CD8-positive, alpha-beta T cell (primary cell): ENCODE measurements at regions of chr9 and their contacts with region 1.

Region 1: DNA sequence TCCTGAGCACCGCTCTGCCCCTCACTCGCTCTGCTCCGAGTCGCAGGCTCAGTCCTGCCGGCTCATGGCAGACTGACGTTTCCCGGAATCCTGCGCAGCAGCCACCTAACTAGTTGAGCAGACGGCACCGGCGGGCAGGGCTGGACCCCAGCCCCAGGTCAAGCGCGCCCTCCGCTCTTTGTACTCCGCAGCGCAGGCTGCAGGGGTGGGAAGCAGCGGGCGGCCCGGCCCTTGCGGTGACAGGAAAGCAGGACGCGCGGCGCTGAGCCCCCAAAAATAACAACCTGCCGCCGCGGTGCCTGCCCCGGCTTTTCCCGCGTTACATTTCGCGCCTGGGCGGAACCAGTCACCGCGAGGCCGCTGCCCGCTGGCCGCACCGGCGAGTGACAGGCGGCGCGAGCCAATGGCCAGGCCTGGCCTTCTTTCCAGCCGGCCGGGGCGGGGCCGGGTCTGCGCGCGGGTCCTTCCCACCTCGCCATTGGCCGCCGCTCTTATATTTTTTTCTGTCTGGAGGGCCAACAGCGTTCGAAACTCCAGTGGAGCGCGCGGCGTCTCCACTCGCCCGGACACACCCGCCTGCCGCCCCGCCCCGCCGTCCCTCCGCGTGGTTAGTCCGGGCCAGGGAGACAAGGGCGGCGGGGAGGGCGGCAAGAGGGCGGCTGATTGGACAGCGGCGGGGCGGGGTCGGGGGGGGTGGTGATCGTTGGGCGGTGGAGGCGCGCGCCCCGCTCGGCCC is at the start of gene ZNF367:
- DNase-seq: peak; percentile 80 to 95 (median 90)
- ATAC-seq: peak; percentile 71
- H3K4me3 ChIP-seq: peak within 1 kb of the TSS; percentile 93 to 96
- H3K4me3 Mint-ChIP-seq: peak within 1 kb of the TSS; percentile 90
- H3K27ac ChIP-seq: peak within 1 kb of the TSS; percentile 88 to 91
- H3K27ac Mint-ChIP-seq: peak within 1 kb of the TSS; percentile 94
- H3K4me1 ChIP-seq: peaks cover 36% of the 10 kb centered on the region
- H3K4me1 Mint-ChIP-seq: peaks cover 33% of the 10 kb centered on the region
- H3K27me3 ChIP-seq: no peaks in the 10 kb centered on the region
- H3K27me3 Mint-ChIP-seq: no peaks in the 10 kb centered on the region
- CTCF ChIP-seq: no peak
- total RNA-seq, gene ZNF367: 6.1 to 6.4 TPM

Region 2: GRCh38 chr9:94726495-94727191 is 1691.6 kb before region 1 on chr9 and contains the start of gene AOPEP:
- CTCF ChIA-PET with region 1: no interaction called
- POLR2A ChIA-PET with region 1: no interaction called
- intact Hi-C with region 1: loop called (anchors 2 to 5 kb)
- DNase-seq: peak; percentile 98 to 100 (median 99)
- ATAC-seq: peak; percentile 95
- H3K4me3 ChIP-seq: peak within 1 kb of the TSS; percentile 88 to 92
- H3K4me3 Mint-ChIP-seq: peak within 1 kb of the TSS; percentile 99
- H3K27ac ChIP-seq: peak within 1 kb of the TSS; percentile 95 to 96
- H3K27ac Mint-ChIP-seq: peak within 1 kb of the TSS; percentile 98
- H3K4me1 ChIP-seq: peaks cover 6% of the 10 kb centered on the region
- H3K4me1 Mint-ChIP-seq: peaks cover 12% of the 10 kb centered on the region
- H3K27me3 ChIP-seq: no peaks in the 10 kb centered on the region
- H3K27me3 Mint-ChIP-seq: no peaks in the 10 kb centered on the region
- CTCF ChIP-seq: no peak
- total RNA-seq, gene AOPEP: 4.5 to 5.2 TPM

Region 3: GRCh38 chr9:96383165-96383942 is 34.9 kb before region 1 on chr9 and contains the start of gene SLC35D2:
- CTCF ChIA-PET with region 1: no interaction called
- POLR2A ChIA-PET with region 1: interaction called, 5 read pairs
- intact Hi-C with region 1: loop called (anchors 1 to 5 kb)
- DNase-seq: peak in 7 of 9 experiments; percentile 1 to 62 (median 15)
- ATAC-seq: peak; percentile 63
- H3K4me3 ChIP-seq: peak within 1 kb of the TSS; percentile 54 to 60
- H3K4me3 Mint-ChIP-seq: peak within 1 kb of the TSS; percentile 90
- H3K27ac ChIP-seq: peak within 1 kb of the TSS in 1 of 2 experiments; percentile 43
- H3K27ac Mint-ChIP-seq: peak within 1 kb of the TSS; percentile 85
- H3K4me1 ChIP-seq: peaks cover 18% of the 10 kb centered on the region
- H3K4me1 Mint-ChIP-seq: peaks cover 36% of the 10 kb centered on the region
- H3K27me3 ChIP-seq: no peaks in the 10 kb centered on the region
- H3K27me3 Mint-ChIP-seq: no peaks in the 10 kb centered on the region
- CTCF ChIP-seq: no peak
- total RNA-seq, gene SLC35D2: 18.5 to 20.5 TPM

Region 4: DNA sequence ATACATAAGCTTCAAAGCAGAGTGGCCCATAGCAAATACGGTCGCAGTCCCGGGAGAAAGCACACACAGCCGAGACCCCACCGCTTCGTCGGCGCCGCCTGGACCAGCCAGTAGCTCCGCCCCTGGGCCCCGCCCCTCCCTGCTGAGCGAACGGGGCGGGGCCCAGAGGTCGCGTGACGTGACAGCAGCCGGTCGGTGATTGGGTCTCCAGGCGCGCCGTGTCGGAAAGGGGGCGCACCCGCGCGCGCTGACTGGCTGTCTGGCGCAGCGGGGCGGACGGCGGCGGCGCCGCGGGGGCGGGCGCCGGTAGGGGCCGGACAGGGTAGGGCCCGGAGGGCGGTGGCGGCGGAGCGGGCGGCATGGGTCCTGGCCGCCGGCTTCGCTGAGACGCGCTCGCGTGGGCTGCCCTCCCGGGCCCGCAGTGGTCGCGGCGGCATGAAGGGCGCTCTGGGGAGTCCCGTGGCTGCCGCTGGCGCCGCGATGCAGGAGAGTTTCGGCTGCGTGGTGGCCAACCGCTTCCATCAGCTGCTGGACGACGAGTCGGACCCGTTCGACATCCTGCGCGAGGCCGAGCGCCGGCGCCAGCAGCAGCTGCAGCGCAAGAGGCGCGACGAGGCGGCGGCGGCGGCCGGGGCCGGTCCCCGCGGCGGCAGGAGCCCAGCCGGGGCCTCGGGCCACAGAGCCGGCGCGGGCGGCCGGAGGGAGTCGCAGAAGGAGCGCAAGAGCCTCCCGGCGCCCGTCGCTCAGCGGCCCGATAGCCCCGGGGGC is 31.8 kb after region 1 on chr9 and contains the start of gene HABP4:
- CTCF ChIA-PET with region 1: interaction called, 4 read pairs
- POLR2A ChIA-PET with region 1: interaction called, 38 read pairs
- intact Hi-C with region 1: loop called (anchors 1 kb)
- DNase-seq: peak; percentile 89 to 97 (median 96)
- ATAC-seq: peak; percentile 93
- H3K4me3 ChIP-seq: peak within 1 kb of the TSS; percentile 62 to 65
- H3K4me3 Mint-ChIP-seq: peak within 1 kb of the TSS; percentile 95
- H3K27ac ChIP-seq: peak within 1 kb of the TSS; percentile 16 to 59
- H3K27ac Mint-ChIP-seq: peak within 1 kb of the TSS; percentile 94
- H3K4me1 ChIP-seq: peaks cover 12% of the 10 kb centered on the region
- H3K4me1 Mint-ChIP-seq: peaks cover 24% of the 10 kb centered on the region
- H3K27me3 ChIP-seq: no peaks in the 10 kb centered on the region
- H3K27me3 Mint-ChIP-seq: no peaks in the 10 kb centered on the region
- CTCF ChIP-seq: no peak
- total RNA-seq, gene HABP4: 31.9 to 32.6 TPM

Region 5: GRCh38 chr9:96654443-96655197 is 236.4 kb after region 1 on chr9:
- CTCF ChIA-PET with region 1: no interaction called
- POLR2A ChIA-PET with region 1: no interaction called
- intact Hi-C with region 1: loop called (anchors 1 to 2 kb)
- DNase-seq: peak; percentile 52 to 96 (median 77)
- ATAC-seq: peak; percentile 88
- H3K4me3 ChIP-seq: peak overlapping the region; percentile 57 to 71
- H3K4me3 Mint-ChIP-seq: peak overlapping the region; percentile 97
- H3K27ac ChIP-seq: peak overlapping the region; percentile 62 to 66
- H3K27ac Mint-ChIP-seq: peak overlapping the region; percentile 98
- H3K4me1 ChIP-seq: peaks cover 7% of the 10 kb centered on the region
- H3K4me1 Mint-ChIP-seq: peaks cover 22% of the 10 kb centered on the region
- H3K27me3 ChIP-seq: no peaks in the 10 kb centered on the region
- H3K27me3 Mint-ChIP-seq: no peaks in the 10 kb centered on the region
- CTCF ChIP-seq: no peak

Region 6: GRCh38 chr9:97411789-97412625 is 993.8 kb after region 1 on chr9 and contains the start of gene TDRD7:
- CTCF ChIA-PET with region 1: no interaction called
- POLR2A ChIA-PET with region 1: no interaction called
- intact Hi-C with region 1: loop called in 1 of 2 experiments (anchors 10 kb)
- DNase-seq: peak; percentile 86 to 97 (median 92)
- ATAC-seq: peak; percentile 88
- H3K4me3 ChIP-seq: peak within 1 kb of the TSS; percentile 62 to 77
- H3K4me3 Mint-ChIP-seq: peak within 1 kb of the TSS; percentile 86
- H3K27ac ChIP-seq: peak within 1 kb of the TSS; percentile 56 to 79
- H3K27ac Mint-ChIP-seq: peak within 1 kb of the TSS; percentile 85
- H3K4me1 ChIP-seq: peaks cover 13% of the 10 kb centered on the region
- H3K4me1 Mint-ChIP-seq: peaks cover 27% of the 10 kb centered on the region
- H3K27me3 ChIP-seq: no peaks in the 10 kb centered on the region
- H3K27me3 Mint-ChIP-seq: peaks cover 14% of the 10 kb centered on the region
- CTCF ChIP-seq: peak; percentile 96
- total RNA-seq, gene TDRD7: 3.5 to 4.5 TPM